Posterior vena cava (tissue), 2 donors: ENCODE measurements at regions of chr3 and their contacts with region 1.

Region 1: DNA sequence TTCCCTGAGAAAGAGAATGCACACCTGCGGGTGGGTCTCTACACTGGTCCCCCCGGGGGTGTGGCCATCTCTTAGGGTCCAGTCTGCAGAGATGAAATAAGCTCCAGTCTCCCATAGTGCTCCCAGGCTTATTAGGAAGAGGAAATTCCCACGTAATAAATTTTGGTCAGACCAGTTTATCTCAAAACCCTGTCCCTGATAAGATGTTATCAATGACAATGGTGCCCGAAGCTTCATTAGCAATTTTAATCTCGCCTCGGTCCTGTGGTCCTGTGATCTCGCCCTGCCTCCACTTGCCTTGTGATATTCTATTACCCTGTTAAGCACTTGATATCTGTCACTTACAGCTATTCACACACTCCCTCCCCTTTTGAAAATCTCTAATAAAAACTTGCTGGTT is 46.8 kb downstream of the OR5H15 start:
- DNase-seq: no peak

Region 2: GRCh38 chr3:98154686-98155085 is 58.6 kb before region 1 on chr3:
- intact Hi-C with region 1: loop called in 1 of 2 experiments (anchors 2 kb)
- DNase-seq: no peak

Region 3: DNA sequence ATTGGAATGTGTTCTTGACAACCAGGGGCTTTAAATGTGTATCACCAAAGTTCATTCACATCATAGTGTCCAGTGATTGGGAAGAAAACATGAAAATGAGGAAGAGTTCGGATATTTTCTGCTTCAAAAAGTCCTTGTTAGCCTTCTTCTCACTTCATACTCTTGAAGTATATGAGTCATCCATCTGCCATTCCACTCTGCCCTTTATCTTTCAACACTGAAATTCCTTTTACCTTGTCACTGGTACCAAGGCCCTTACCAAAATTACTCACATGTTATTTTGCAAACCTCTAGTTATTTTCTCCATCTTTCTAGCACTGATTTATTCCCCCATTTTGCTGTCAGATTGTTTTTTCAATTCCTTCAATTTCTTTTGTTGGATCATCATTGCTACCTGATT is 14.3 kb before region 1 on chr3:
- intact Hi-C with region 1: no loop called
- DNase-seq: no peak